Activated CD4-positive, alpha-beta T cell treated with anti-CD3 and anti-CD28 coated beads, Interleukin-2, amount 10 ng/mL, durations not matched to agents 24 days and 14 days (primary cell): ENCODE measurements at regions of chr1 and their contacts with region 1.

Region 1: GRCh38 chr1:6602669-6603237 is at the start of gene KLHL21:
- DNase-seq: peak; percentile 94
- H3K4me3 Mint-ChIP-seq: peak within 1 kb of the TSS; percentile 95
- H3K27ac Mint-ChIP-seq: peak within 1 kb of the TSS; percentile 95
- H3K4me1 Mint-ChIP-seq: peaks cover 26% of the 10 kb centered on the region
- H3K27me3 Mint-ChIP-seq: peaks cover 4% of the 10 kb centered on the region
- total RNA-seq, gene KLHL21: 26.1 and 26.8 TPM in 2 replicates

Region 2: GRCh38 chr1:6205849-6206519 is 396.8 kb before region 1 on chr1 and contains the start of gene RNF207:
- intact Hi-C with region 1: loop called (anchors 5 kb)
- DNase-seq: peak; percentile 94
- H3K4me3 Mint-ChIP-seq: peak within 1 kb of the TSS; percentile 85
- H3K27ac Mint-ChIP-seq: peak within 1 kb of the TSS; percentile 82
- H3K4me1 Mint-ChIP-seq: peaks cover 17% of the 10 kb centered on the region
- H3K27me3 Mint-ChIP-seq: no peaks in the 10 kb centered on the region
- total RNA-seq, gene RNF207: 53.2 and 54.7 TPM in 2 replicates

Region 3: GRCh38 chr1:6464514-6464836 is 138.3 kb before region 1 on chr1:
- intact Hi-C with region 1: loop called (anchors 2 kb)
- DNase-seq: peak; percentile 79
- H3K4me3 Mint-ChIP-seq: peak overlapping the region; percentile 98
- H3K27ac Mint-ChIP-seq: peak overlapping the region; percentile 85
- H3K4me1 Mint-ChIP-seq: peaks cover 41% of the 10 kb centered on the region
- H3K27me3 Mint-ChIP-seq: no peaks in the 10 kb centered on the region

Region 4: DNA sequence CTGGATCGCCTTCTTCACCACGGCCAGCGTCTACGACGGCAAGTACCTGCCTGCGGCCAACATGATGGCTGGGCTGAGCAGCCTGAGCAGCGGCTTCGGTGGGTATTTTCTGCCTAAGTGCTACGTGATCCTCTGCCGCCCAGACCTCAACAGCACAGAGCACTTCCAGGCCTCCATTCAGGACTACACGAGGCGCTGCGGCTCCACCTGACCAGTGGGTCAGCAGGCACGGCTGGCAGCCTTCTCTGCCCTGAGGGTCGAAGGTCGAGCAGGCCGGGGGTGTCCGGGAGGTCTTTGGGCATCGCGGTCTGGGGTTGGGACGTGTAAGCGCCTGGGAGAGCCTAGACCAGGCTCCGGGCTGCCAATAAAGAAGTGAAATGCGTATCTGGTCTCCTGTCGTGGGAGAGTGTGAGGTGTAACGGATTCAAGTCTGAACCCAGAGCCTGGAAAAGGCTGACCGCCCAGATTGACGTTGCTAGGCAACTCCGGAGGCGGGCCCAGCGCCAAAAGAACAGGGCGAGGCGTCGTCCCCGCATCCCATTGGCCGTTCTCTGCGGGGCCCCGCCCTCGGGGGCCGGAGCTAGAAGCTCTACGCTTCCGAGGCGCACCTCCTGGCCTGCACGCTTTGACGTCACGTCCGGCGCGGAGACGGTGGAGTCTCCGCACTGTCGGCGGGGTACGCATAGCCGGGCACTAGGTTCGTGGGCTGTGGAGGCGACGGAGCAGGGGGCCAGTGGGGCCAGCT is 23.2 kb before region 1 on chr1 and contains the start of gene ZBTB48:
- intact Hi-C with region 1: loop called (anchors 1 kb)
- DNase-seq: peak; percentile 99
- H3K4me3 Mint-ChIP-seq: peak within 1 kb of the TSS; percentile 96
- H3K27ac Mint-ChIP-seq: peak within 1 kb of the TSS; percentile 93
- H3K4me1 Mint-ChIP-seq: peaks cover 24% of the 10 kb centered on the region
- H3K27me3 Mint-ChIP-seq: no peaks in the 10 kb centered on the region
- total RNA-seq, gene ZBTB48: 32.9 and 37.8 TPM in 2 replicates

Region 5: GRCh38 chr1:6624710-6625583 is 22.2 kb after region 1 on chr1 and contains the start of gene THAP3:
- intact Hi-C with region 1: loop called (anchors 1 kb)
- DNase-seq: peak; percentile 95
- H3K4me3 Mint-ChIP-seq: peak within 1 kb of the TSS; percentile 95
- H3K27ac Mint-ChIP-seq: peak within 1 kb of the TSS; percentile 90
- H3K4me1 Mint-ChIP-seq: peaks cover 28% of the 10 kb centered on the region
- H3K27me3 Mint-ChIP-seq: no peaks in the 10 kb centered on the region
- total RNA-seq, gene THAP3: 19.5 and 24.6 TPM in 2 replicates